CD4-positive, alpha-beta T cell (primary cell): ENCODE measurements at regions of chr18 and their contacts with region 1.

Region 1: GRCh38 chr18:57561728-57562423 is 24.6 kb downstream of the FECH start:
- DNase-seq: peak in 6 of 14 experiments; percentile 2 to 72 (median 42)
- ATAC-seq: peak; percentile 56
- H3K4me3 ChIP-seq: no peak overlapping the region
- H3K4me3 Mint-ChIP-seq: no peak overlapping the region
- H3K27ac ChIP-seq: no peak overlapping the region
- H3K27ac Mint-ChIP-seq: no peak overlapping the region
- H3K4me1 ChIP-seq: no peaks in the 10 kb centered on the region
- H3K4me1 Mint-ChIP-seq: no peaks in the 10 kb centered on the region
- H3K27me3 ChIP-seq: no peaks in the 10 kb centered on the region
- H3K27me3 Mint-ChIP-seq: no peaks in the 10 kb centered on the region
- CTCF ChIP-seq: peak; percentile 99

Region 2: DNA sequence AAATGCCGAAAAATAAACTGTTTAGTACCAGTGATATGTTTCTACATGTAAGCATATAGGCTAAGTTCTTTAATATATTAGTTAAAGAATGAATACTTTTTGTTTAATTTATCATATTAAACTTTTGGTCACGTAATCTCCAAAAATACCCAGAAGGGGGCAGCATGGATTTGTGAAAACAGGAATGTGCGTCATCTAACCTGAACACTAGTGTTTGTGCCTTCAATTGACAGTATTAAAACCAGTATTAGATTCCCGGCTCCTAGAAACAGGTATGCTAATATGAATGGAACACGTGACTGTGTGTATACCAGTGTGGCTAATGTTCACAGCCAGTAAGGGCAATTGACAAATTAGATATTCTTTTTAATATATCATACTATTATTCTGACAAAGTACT is 858.9 kb before region 1 on chr18:
- CTCF ChIA-PET with region 1: interaction called, 4 read pairs
- POLR2A ChIA-PET with region 1: no interaction called
- intact Hi-C with region 1: loop called (anchors 2 to 5 kb)
- DNase-seq: peak in 6 of 14 experiments; percentile 3 to 52 (median 46)
- ATAC-seq: no peak
- H3K4me3 ChIP-seq: no peak overlapping the region
- H3K4me3 Mint-ChIP-seq: no peak overlapping the region
- H3K27ac ChIP-seq: no peak overlapping the region
- H3K27ac Mint-ChIP-seq: no peak overlapping the region
- H3K4me1 ChIP-seq: no peaks in the 10 kb centered on the region
- H3K4me1 Mint-ChIP-seq: no peaks in the 10 kb centered on the region
- H3K27me3 ChIP-seq: no peaks in the 10 kb centered on the region
- H3K27me3 Mint-ChIP-seq: no peaks in the 10 kb centered on the region
- CTCF ChIP-seq: peak; percentile 64

Region 3: DNA sequence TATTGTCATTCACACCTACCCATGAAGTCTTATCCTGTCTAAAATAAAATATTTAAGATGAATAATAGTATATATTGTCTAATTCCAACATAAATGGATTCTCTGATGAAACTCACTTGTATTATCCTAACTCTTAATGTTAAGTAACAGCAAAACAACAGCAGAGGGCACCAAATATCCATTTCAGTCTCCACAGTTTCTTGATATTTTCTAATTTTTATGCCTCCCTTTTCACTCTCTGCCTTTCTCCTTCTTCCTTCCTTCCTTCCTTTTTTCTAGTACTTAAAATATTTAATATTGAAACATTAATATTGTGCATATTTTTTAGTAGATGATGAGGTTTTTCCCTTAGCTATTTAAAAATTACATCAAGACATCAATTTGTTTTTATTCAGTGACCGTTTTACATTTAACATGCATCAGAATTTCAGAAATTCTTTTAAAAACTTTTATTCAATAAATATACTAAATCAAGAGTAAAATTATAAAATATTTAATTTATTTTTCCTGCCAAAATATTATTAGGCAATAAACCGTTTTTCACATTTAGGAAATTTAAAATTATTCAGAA is 813.1 kb before region 1 on chr18:
- CTCF ChIA-PET with region 1: interaction called, 3 read pairs
- POLR2A ChIA-PET with region 1: no interaction called
- intact Hi-C with region 1: loop called (anchors 1 to 2 kb)
- DNase-seq: peak in 3 of 14 experiments; percentile 21 to 51 (median 45)
- ATAC-seq: no peak
- H3K4me3 ChIP-seq: no peak overlapping the region
- H3K4me3 Mint-ChIP-seq: no peak overlapping the region
- H3K27ac ChIP-seq: no peak overlapping the region
- H3K27ac Mint-ChIP-seq: no peak overlapping the region
- H3K4me1 ChIP-seq: no peaks in the 10 kb centered on the region
- H3K4me1 Mint-ChIP-seq: peaks cover 25% of the 10 kb centered on the region
- H3K27me3 ChIP-seq: no peaks in the 10 kb centered on the region
- H3K27me3 Mint-ChIP-seq: no peaks in the 10 kb centered on the region
- CTCF ChIP-seq: peak; percentile 72

Region 4: GRCh38 chr18:56789889-56790180 is 772.0 kb before region 1 on chr18:
- CTCF ChIA-PET with region 1: no interaction called
- POLR2A ChIA-PET with region 1: no interaction called
- intact Hi-C with region 1: loop called in 1 of 2 experiments (anchors 5 kb)
- DNase-seq: no peak
- ATAC-seq: no peak
- H3K4me3 ChIP-seq: no peak overlapping the region
- H3K4me3 Mint-ChIP-seq: no peak overlapping the region
- H3K27ac ChIP-seq: no peak overlapping the region
- H3K27ac Mint-ChIP-seq: no peak overlapping the region
- H3K4me1 ChIP-seq: no peaks in the 10 kb centered on the region
- H3K4me1 Mint-ChIP-seq: no peaks in the 10 kb centered on the region
- H3K27me3 ChIP-seq: no peaks in the 10 kb centered on the region
- H3K27me3 Mint-ChIP-seq: no peaks in the 10 kb centered on the region
- CTCF ChIP-seq: no peak

Region 5: GRCh38 chr18:56873441-56874140 is 688.3 kb before region 1 on chr18:
- CTCF ChIA-PET with region 1: no interaction called
- POLR2A ChIA-PET with region 1: no interaction called
- intact Hi-C with region 1: loop called in 1 of 2 experiments (anchors 5 kb)
- DNase-seq: peak in 8 of 14 experiments; percentile 2 to 40 (median 26)
- ATAC-seq: peak; percentile 82
- H3K4me3 ChIP-seq: no peak overlapping the region
- H3K4me3 Mint-ChIP-seq: peak overlapping the region; percentile 23
- H3K27ac ChIP-seq: no peak overlapping the region
- H3K27ac Mint-ChIP-seq: no peak overlapping the region
- H3K4me1 ChIP-seq: peaks cover 6% of the 10 kb centered on the region
- H3K4me1 Mint-ChIP-seq: peaks cover 27% of the 10 kb centered on the region
- H3K27me3 ChIP-seq: no peaks in the 10 kb centered on the region
- H3K27me3 Mint-ChIP-seq: no peaks in the 10 kb centered on the region
- CTCF ChIP-seq: no peak

Region 6: DNA sequence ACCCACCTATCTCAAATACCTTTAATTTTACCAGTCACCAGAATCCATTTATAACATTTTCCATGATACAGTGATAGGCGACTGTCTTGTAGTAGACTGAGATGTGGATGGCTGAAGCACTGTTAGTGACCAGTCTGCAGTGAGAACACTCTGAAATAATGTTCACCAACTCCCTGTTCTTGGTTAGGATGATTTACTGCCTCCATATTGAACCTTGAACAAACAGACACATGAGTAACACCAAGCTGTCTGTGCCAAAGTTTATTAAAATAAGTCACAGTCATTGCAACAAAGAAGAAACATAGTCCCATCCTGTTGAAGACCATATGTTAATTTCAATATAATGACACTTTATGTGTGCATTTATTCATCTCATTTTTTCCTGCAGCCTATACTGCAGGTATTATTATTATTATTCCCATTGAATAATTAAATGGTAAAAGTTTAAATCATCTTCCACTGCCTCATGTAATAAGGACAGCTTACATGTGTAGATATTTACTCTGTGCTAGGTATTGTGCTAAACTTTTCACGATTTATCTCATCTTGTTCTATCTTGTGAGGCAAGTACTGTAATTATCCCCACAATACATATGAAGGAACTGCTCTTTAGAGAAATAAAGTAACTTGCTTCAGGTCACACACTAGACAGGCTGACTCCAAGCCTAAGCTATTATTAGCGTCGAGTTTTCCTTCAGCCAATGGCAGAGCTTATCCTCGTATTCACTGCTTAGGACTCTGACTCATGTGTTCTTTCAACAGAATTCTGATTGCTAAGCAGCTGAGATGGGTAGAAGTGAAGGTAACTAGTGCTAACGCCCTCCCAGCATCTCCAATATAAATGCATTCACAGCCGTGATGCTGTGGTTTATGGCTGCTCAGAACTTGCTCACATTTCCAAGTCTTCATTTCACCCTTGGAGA is 64.2 kb before region 1 on chr18:
- CTCF ChIA-PET with region 1: no interaction called
- POLR2A ChIA-PET with region 1: no interaction called
- intact Hi-C with region 1: no loop called
- DNase-seq: no peak
- ATAC-seq: no peak
- H3K4me3 ChIP-seq: no peak overlapping the region
- H3K4me3 Mint-ChIP-seq: no peak overlapping the region
- H3K27ac ChIP-seq: no peak overlapping the region
- H3K27ac Mint-ChIP-seq: no peak overlapping the region
- H3K4me1 ChIP-seq: no peaks in the 10 kb centered on the region
- H3K4me1 Mint-ChIP-seq: no peaks in the 10 kb centered on the region
- H3K27me3 ChIP-seq: peaks cover 0 to 9% of the 10 kb centered on the region in 2 experiments
- H3K27me3 Mint-ChIP-seq: peaks cover 24% of the 10 kb centered on the region
- CTCF ChIP-seq: no peak

Region 7: DNA sequence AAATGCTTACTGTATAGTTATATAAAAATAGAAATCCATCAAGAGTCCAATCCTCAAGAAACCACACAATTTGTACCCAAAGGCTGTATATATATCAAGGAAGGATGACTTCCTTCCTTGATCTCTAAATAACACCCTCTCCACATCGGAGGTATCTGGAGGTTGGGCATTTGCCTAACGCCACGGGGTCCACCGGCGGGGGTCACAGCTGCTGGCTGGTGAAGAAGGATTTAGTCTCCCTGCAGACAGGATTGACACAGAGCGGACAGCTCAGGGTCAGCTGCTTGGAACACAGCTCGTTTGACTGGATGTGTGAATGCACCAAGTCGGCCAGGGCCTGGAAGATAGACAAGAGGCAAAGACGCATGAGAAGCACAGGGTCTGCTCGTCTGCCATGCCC is 11.4 kb before region 1 on chr18:
- CTCF ChIA-PET with region 1: interaction called, 10 read pairs
- POLR2A ChIA-PET with region 1: no interaction called
- intact Hi-C with region 1: no loop called
- DNase-seq: no peak
- ATAC-seq: no peak
- H3K4me3 ChIP-seq: no peak overlapping the region
- H3K4me3 Mint-ChIP-seq: no peak overlapping the region
- H3K27ac ChIP-seq: no peak overlapping the region
- H3K27ac Mint-ChIP-seq: no peak overlapping the region
- H3K4me1 ChIP-seq: no peaks in the 10 kb centered on the region
- H3K4me1 Mint-ChIP-seq: peaks cover 1% of the 10 kb centered on the region
- H3K27me3 ChIP-seq: no peaks in the 10 kb centered on the region
- H3K27me3 Mint-ChIP-seq: no peaks in the 10 kb centered on the region
- CTCF ChIP-seq: no peak